Endothelial cell of umbilical vein (primary cell): ENCODE measurements at regions of chr3 and their contacts with region 1.

Region 1: GRCh38 chr3:124860599-124860998 is 26.6 kb downstream of the ITGB5 start:
- DNase-seq: peak; percentile 89
- H3K4me3 ChIP-seq: no peak overlapping the region
- H3K27ac ChIP-seq: peak overlapping the region; percentile 61
- H3K4me1 ChIP-seq: peaks cover 34% of the 10 kb centered on the region
- H3K27me3 ChIP-seq: no peaks in the 10 kb centered on the region
- CTCF ChIP-seq: no peak
- POLR2A ChIP-seq: no peak

Region 2: DNA sequence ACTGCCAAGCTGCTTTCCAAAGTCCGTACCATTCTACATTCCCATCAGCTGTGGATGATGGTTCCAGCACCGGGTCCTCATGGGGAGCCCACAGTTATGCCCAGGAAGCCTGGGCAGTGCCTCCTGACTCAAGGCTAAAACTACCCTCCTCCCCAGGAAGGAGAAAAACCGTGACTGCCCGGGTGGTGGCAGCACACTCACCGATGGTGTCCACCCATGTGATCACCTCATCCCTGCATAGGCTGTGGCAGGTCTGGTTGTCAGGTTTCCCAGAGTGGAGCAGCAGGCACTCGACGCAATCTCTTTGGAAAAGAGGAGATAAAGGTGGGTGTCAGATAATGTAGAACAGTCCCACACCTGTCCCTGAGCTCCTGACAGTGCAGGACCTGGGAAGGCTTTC is 91.8 kb before region 1 on chr3:
- CTCF ChIA-PET with region 1: no interaction called
- POLR2A ChIA-PET with region 1: no interaction called
- dilution Hi-C with region 1: no loop called
- intact Hi-C with region 1: loop called (anchors 1 kb)
- DNase-seq: no peak
- H3K4me3 ChIP-seq: no peak overlapping the region
- H3K27ac ChIP-seq: no peak overlapping the region
- H3K4me1 ChIP-seq: peaks cover 31% of the 10 kb centered on the region
- H3K27me3 ChIP-seq: no peaks in the 10 kb centered on the region
- CTCF ChIP-seq: peak in 1 of 2 donors; percentile 26
- POLR2A ChIP-seq: no peak

Region 3: DNA sequence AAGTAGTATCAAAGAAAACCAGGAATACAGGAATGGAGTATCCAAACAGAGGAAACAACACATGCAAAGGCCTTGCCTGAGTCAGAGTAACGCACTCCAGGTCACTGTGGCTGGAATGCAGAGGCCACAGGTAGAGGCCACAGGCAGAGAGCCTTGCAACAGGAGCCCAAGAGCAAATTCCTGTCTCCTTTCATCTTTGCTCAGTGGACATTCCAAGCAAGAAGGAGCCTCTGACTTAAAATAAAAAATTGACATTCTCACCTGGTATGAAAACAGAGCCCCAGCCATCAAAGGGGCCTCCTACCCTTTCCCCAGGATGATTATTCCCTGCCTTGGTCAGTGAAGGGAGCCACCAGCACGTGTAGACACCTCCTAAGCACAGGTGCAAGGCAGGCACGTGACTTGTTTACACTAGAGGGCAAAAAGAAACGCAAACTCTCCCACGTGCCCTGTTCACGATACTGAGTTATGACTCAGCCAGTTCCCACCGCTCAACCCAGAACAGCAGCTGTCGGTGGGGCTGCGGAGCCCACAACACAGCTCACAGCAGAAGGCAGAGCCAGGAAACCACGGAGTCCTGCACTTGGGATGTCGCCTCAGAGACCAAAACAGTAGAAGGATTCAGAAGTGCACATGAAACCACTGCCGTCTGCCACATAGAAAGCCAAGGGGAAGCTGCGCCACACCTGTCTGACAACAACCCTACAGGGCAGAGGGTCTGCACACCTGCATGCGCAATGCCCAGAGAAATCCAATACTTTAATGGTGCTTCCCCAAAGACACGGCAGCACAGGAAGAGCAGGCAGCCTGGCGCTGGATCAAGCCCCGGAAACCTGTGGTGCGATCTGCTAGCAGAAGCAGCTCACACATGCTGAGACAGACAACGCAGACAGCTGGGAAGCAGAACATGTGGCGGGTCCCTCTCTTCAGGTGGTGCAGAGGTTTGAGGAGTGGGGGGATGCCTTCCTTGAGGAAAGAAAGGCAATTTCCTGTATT is 25.6 kb before region 1 on chr3:
- CTCF ChIA-PET with region 1: interaction called, 5 read pairs
- POLR2A ChIA-PET with region 1: no interaction called
- dilution Hi-C with region 1: no loop called
- intact Hi-C with region 1: loop called (anchors 1 kb)
- DNase-seq: peak; percentile 90
- H3K4me3 ChIP-seq: no peak overlapping the region
- H3K27ac ChIP-seq: peak overlapping the region; percentile 25
- H3K4me1 ChIP-seq: peaks cover 44% of the 10 kb centered on the region
- H3K27me3 ChIP-seq: no peaks in the 10 kb centered on the region
- CTCF ChIP-seq: no peak
- POLR2A ChIP-seq: no peak

Region 4: DNA sequence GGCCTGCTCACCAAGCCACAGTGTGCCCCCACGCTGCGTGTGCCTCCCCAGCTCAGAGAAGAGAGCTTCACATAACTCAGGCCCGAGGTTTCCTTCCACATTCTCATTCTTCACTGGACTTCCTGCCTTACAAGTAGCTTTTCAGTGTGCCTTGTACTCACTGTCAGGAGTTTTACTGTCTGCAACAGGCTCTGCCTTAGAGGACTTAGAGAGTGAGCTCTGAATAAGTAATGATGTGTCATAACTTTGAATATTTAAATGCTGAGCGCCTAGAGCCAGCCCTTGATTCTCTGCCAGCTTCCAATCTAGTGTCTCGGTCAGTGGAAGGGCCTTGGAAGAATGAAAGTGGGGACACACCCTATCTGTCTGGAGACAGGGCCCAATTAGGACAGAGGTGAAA is 15.2 kb before region 1 on chr3:
- CTCF ChIA-PET with region 1: interaction called, 7 read pairs
- POLR2A ChIA-PET with region 1: no interaction called
- dilution Hi-C with region 1: no loop called
- intact Hi-C with region 1: loop called (anchors 2 kb)
- DNase-seq: peak; percentile 70
- H3K4me3 ChIP-seq: no peak overlapping the region
- H3K27ac ChIP-seq: peak overlapping the region; percentile 11
- H3K4me1 ChIP-seq: peaks cover 9% of the 10 kb centered on the region
- H3K27me3 ChIP-seq: no peaks in the 10 kb centered on the region
- CTCF ChIP-seq: no peak
- POLR2A ChIP-seq: no peak

Region 5: DNA sequence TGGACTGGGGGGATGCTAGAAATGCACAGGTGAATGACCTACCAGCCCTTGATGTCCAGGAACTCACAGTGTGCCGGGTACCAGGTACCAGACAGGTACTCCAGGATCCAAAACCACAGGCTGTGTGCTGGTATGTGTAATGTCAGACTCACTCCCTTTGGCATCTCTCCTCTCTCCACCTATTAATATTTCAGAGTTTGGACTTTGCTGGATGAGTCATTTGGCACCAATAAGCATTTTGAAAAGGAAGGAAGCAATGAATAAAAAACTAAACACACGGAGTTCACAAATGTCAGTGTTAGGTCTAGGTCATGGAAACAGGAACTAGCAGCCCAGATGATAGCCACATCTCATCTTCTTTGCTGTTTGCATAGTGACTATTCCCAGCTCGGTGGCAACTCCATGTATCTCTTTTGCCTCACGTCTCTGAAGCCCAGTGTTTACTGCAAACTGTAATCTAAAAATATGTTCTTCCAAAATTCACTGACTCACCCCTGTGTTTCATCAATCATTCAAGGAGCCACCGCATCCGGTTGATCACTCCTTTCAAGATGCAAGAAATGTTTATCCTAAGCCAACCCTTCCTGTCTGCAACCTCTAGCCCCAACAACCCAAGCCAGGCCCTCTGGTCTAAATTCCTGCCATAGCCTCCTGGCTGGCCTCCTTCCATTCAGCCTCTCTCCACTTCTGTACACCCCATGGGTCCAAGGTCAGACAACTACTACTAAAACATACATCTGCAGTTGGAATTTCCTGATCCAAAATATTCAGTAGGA is 18.1 kb after region 1 on chr3:
- CTCF ChIA-PET with region 1: no interaction called
- POLR2A ChIA-PET with region 1: no interaction called
- dilution Hi-C with region 1: no loop called
- intact Hi-C with region 1: loop called (anchors 1 kb)
- DNase-seq: peak; percentile 94
- H3K4me3 ChIP-seq: no peak overlapping the region
- H3K27ac ChIP-seq: peak overlapping the region; percentile 91
- H3K4me1 ChIP-seq: peaks cover 34% of the 10 kb centered on the region
- H3K27me3 ChIP-seq: no peaks in the 10 kb centered on the region
- CTCF ChIP-seq: no peak
- POLR2A ChIP-seq: peak; percentile 57

Region 6: DNA sequence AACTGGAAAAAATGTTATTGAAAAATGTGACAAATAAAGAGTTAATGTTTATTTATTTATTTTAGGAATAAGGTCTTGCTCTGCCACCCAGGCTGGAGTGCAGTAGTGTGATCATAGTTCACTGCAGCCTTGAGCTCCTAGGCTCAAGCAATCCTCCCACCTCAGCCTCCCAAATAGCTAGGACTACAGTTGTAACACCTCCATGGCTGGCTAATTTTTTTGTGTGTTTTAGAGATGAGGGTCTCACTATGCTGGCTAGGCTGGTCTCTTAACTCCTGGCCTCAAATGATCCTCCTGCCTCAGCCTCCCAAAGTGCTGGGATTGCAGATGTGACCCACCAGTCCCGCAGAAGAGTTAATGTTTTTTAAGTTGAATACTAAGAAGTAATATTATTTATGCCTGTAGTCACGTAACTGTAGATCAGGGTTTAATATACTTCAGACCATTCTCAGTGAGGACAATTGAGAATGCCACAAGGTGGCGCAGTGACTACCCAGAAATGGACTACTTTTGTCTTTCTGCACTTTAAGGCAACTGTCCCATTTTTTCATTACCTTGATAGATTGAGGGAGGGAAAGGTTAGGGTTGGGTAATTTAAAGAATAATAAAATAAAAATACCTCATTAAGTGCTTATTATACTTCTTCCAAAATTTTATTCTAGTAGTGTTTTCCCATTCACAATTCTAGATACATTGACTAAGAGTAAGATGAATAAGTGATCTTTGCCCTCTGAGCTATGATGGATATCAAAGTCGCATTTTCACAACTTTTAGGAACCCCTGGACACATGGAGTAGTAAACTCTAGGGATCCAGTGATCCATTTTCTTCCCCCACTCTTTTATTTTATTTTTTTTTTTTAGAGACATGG is 68.0 kb after region 1 on chr3:
- CTCF ChIA-PET with region 1: no interaction called
- POLR2A ChIA-PET with region 1: no interaction called
- dilution Hi-C with region 1: no loop called
- intact Hi-C with region 1: no loop called
- DNase-seq: peak; percentile 74
- H3K4me3 ChIP-seq: no peak overlapping the region
- H3K27ac ChIP-seq: no peak overlapping the region
- H3K4me1 ChIP-seq: no peaks in the 10 kb centered on the region
- H3K27me3 ChIP-seq: peaks cover 0 to 3% of the 10 kb centered on the region in 2 experiments
- CTCF ChIP-seq: peak; percentile 69 to 74
- POLR2A ChIP-seq: no peak